Mammary epithelial cell (primary cell): ENCODE measurements at regions of chr1 and their contacts with region 1.

Region 1: GRCh38 chr1:162319493-162320175 is 57.0 kb downstream of the SPATA46 start:
- DNase-seq: peak; percentile 74
- H3K4me3 ChIP-seq: no peak overlapping the region
- H3K27ac ChIP-seq: no peak overlapping the region
- H3K4me1 ChIP-seq: peaks cover 12% of the 10 kb centered on the region
- H3K27me3 ChIP-seq: no peaks in the 10 kb centered on the region
- CTCF ChIP-seq: no peak

Region 2: DNA sequence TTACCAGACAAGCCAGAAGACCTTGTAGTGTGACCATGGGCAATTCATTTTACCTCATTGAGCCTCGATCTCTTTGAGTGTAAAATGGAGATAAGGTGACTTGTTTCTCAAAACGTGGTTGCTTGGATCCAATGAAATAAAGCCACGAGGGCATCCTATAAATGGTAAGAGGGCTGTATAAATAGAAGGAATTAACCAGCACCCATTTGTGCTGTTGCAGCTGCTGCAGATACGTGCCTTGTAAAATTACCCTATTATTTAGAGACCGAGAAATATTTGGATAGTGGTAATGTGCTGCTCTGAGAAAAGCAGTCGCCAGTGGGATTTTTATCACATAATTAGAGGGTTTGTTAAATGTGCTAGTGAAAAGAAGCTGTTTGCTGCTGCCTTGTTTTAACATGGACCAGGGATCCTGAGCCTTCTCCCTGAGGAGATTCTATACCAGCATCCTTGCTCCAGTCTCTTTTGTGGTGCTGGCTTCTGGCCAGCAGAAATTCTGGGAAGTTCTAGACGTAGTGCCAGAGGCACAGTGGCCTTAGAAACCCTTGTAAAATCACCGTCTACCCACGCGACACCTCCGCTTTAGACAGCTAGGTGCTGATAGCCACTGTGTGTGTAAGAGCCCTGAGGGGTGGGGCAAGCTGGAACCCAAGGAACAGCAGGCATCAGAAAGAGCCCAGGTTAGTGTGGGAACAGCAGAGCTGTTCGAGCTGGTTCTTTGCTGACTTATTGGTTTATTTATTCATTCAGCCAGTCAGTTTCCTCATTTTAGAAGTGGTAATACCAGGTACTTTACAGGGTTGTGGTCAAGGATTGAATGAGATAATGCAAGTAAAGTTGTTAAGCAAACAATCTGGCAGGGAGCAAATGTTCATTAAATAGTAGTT is 112.6 kb before region 1 on chr1:
- CTCF ChIA-PET with region 1: no interaction called
- dilution Hi-C with region 1: no loop called
- in situ Hi-C with region 1: no loop called
- intact Hi-C with region 1: no loop called
- DNase-seq: peak; percentile 82
- H3K4me3 ChIP-seq: no peak overlapping the region
- H3K27ac ChIP-seq: no peak overlapping the region
- H3K4me1 ChIP-seq: peaks cover 8% of the 10 kb centered on the region
- H3K27me3 ChIP-seq: no peaks in the 10 kb centered on the region
- CTCF ChIP-seq: no peak

Region 3: GRCh38 chr1:162220009-162220539 is 99.6 kb before region 1 on chr1:
- CTCF ChIA-PET with region 1: no interaction called
- dilution Hi-C with region 1: loop called (anchors 5 kb)
- in situ Hi-C with region 1: no loop called
- intact Hi-C with region 1: no loop called
- DNase-seq: no peak
- H3K4me3 ChIP-seq: no peak overlapping the region
- H3K27ac ChIP-seq: no peak overlapping the region
- H3K4me1 ChIP-seq: peaks cover 3% of the 10 kb centered on the region
- H3K27me3 ChIP-seq: peaks cover 2% of the 10 kb centered on the region
- CTCF ChIP-seq: no peak

Region 4: GRCh38 chr1:162276493-162276892 is 43.1 kb before region 1 on chr1:
- CTCF ChIA-PET with region 1: no interaction called
- dilution Hi-C with region 1: loop called (anchors 5 kb)
- in situ Hi-C with region 1: no loop called
- intact Hi-C with region 1: no loop called
- DNase-seq: peak; percentile 16
- H3K4me3 ChIP-seq: no peak overlapping the region
- H3K27ac ChIP-seq: no peak overlapping the region
- H3K4me1 ChIP-seq: no peaks in the 10 kb centered on the region
- H3K27me3 ChIP-seq: no peaks in the 10 kb centered on the region
- CTCF ChIP-seq: peak in 1 of 2 donors; percentile 57